B cell (primary cell): ENCODE measurements at regions of chr14 and their contacts with region 1.

Region 1: GRCh38 chr14:75293920-75294642 is 15.5 kb downstream of the FOS start:
- DNase-seq: peak; percentile 98
- ATAC-seq: peak; percentile 88
- H3K4me3 ChIP-seq: peak overlapping the region; percentile 71 to 88 (median 74)
- H3K4me3 Mint-ChIP-seq: peak overlapping the region; percentile 95
- H3K27ac ChIP-seq: peak overlapping the region; percentile 95 to 99
- H3K27ac Mint-ChIP-seq: peak overlapping the region; percentile 97
- H3K4me1 ChIP-seq: peaks cover 18 to 28% of the 10 kb centered on the region in 2 donors
- H3K4me1 Mint-ChIP-seq: peaks cover 22% of the 10 kb centered on the region
- H3K27me3 ChIP-seq: peaks cover 0 to 4% (median 0%) of the 10 kb centered on the region in 4 experiments
- H3K27me3 Mint-ChIP-seq: peaks cover 8% of the 10 kb centered on the region
- CTCF ChIP-seq: no peak

Region 2: GRCh38 chr14:75132382-75133086 is 161.5 kb before region 1 on chr14:
- CTCF ChIA-PET with region 1: interaction called, 321 read pairs
- POLR2A ChIA-PET with region 1: interaction called, 6 read pairs
- intact Hi-C with region 1: loop called (anchors 1 kb)
- DNase-seq: peak; percentile 85
- ATAC-seq: peak; percentile 95
- H3K4me3 ChIP-seq: no peak overlapping the region
- H3K4me3 Mint-ChIP-seq: no peak overlapping the region
- H3K27ac ChIP-seq: peak overlapping the region in 1 of 2 donors; percentile 49
- H3K27ac Mint-ChIP-seq: peak overlapping the region; percentile 3
- H3K4me1 ChIP-seq: peaks cover 4 to 5% of the 10 kb centered on the region in 2 donors
- H3K4me1 Mint-ChIP-seq: peaks cover 14% of the 10 kb centered on the region
- H3K27me3 ChIP-seq: no peaks in the 10 kb centered on the region
- H3K27me3 Mint-ChIP-seq: no peaks in the 10 kb centered on the region
- CTCF ChIP-seq: peak; percentile 78

Region 3: GRCh38 chr14:75176142-75176820 is 117.8 kb before region 1 on chr14 and contains the start of gene TMED10:
- CTCF ChIA-PET with region 1: interaction called, 20 read pairs
- POLR2A ChIA-PET with region 1: interaction called, 11 read pairs
- intact Hi-C with region 1: loop called (anchors 1 kb)
- DNase-seq: peak; percentile 97
- ATAC-seq: peak; percentile 74
- H3K4me3 ChIP-seq: peak within 1 kb of the TSS; percentile 82 to 99 (median 91)
- H3K4me3 Mint-ChIP-seq: peak within 1 kb of the TSS; percentile 92
- H3K27ac ChIP-seq: peak within 1 kb of the TSS; percentile 97 to 99
- H3K27ac Mint-ChIP-seq: peak within 1 kb of the TSS; percentile 97
- H3K4me1 ChIP-seq: peaks cover 17 to 22% of the 10 kb centered on the region in 2 donors
- H3K4me1 Mint-ChIP-seq: peaks cover 32% of the 10 kb centered on the region
- H3K27me3 ChIP-seq: no peaks in the 10 kb centered on the region
- H3K27me3 Mint-ChIP-seq: no peaks in the 10 kb centered on the region
- CTCF ChIP-seq: no peak
- total RNA-seq, gene TMED10: 111 and 119 TPM in 2 replicates

Region 4: GRCh38 chr14:75223664-75224154 is 70.4 kb before region 1 on chr14:
- CTCF ChIA-PET with region 1: interaction called, 5 read pairs
- POLR2A ChIA-PET with region 1: interaction called, 5 read pairs
- intact Hi-C with region 1: loop called (anchors 2 kb)
- DNase-seq: peak; percentile 64
- ATAC-seq: peak; percentile 54
- H3K4me3 ChIP-seq: no peak overlapping the region
- H3K4me3 Mint-ChIP-seq: peak overlapping the region; percentile 35
- H3K27ac ChIP-seq: no peak overlapping the region
- H3K27ac Mint-ChIP-seq: peak overlapping the region; percentile 12
- H3K4me1 ChIP-seq: peaks cover 34 to 45% of the 10 kb centered on the region in 2 donors
- H3K4me1 Mint-ChIP-seq: peaks cover 39% of the 10 kb centered on the region
- H3K27me3 ChIP-seq: no peaks in the 10 kb centered on the region
- H3K27me3 Mint-ChIP-seq: no peaks in the 10 kb centered on the region
- CTCF ChIP-seq: no peak

Region 5: GRCh38 chr14:75278422-75279161 is 15.5 kb before region 1 on chr14 and contains the start of gene FOS:
- CTCF ChIA-PET with region 1: interaction called, 11 read pairs
- POLR2A ChIA-PET with region 1: interaction called, 6 read pairs
- intact Hi-C with region 1: loop called (anchors 1 kb)
- DNase-seq: peak; percentile 99
- ATAC-seq: peak; percentile 63
- H3K4me3 ChIP-seq: peak within 1 kb of the TSS; percentile 61 to 100 (median 95)
- H3K4me3 Mint-ChIP-seq: peak within 1 kb of the TSS; percentile 99
- H3K27ac ChIP-seq: peak within 1 kb of the TSS; percentile 50 to 93
- H3K27ac Mint-ChIP-seq: peak within 1 kb of the TSS; percentile 96
- H3K4me1 ChIP-seq: peaks cover 56 to 58% of the 10 kb centered on the region in 2 donors
- H3K4me1 Mint-ChIP-seq: peaks cover 65% of the 10 kb centered on the region
- H3K27me3 ChIP-seq: peaks cover 0 to 52% (median 28%) of the 10 kb centered on the region in 4 experiments
- H3K27me3 Mint-ChIP-seq: peaks cover 38% of the 10 kb centered on the region
- CTCF ChIP-seq: no peak
- total RNA-seq, gene FOS: 103 and 104 TPM in 2 replicates

Region 6: DNA sequence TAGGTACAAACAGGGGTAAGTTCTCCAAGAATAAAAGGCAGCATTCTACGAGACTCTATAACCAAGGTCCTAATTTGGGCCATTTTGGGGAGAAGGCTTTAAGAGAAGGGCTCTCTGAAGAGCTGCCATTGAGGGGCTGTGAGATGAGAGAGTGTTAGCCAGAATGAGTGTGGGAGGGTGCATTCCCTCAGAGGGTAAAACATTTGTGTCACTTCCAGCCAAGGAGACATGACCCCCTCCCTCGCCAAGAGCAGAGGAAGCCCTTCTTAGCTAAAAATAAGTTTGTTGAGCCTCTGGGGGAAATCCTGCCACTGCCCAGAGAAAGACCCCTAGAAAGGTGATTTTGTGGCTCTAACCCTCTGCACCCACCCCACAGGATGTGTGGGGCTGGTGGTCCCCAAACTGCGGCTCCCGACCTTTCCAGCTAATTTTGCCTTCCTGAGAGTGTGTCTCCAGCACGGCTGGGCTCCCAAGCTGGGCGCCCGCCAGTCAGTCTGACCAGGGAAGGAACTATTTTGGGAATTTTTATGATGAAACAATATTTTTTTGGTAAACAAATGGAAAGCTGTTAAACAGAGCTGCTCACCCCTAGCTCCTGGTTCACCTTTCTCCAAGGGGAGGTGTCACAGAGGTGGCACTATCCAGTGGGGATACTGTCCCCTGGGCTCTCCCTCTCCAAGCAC is 67.8 kb after region 1 on chr14:
- CTCF ChIA-PET with region 1: no interaction called
- POLR2A ChIA-PET with region 1: no interaction called
- intact Hi-C with region 1: no loop called
- DNase-seq: no peak
- ATAC-seq: no peak
- H3K4me3 ChIP-seq: no peak overlapping the region
- H3K4me3 Mint-ChIP-seq: no peak overlapping the region
- H3K27ac ChIP-seq: no peak overlapping the region
- H3K27ac Mint-ChIP-seq: no peak overlapping the region
- H3K4me1 ChIP-seq: no peaks in the 10 kb centered on the region
- H3K4me1 Mint-ChIP-seq: no peaks in the 10 kb centered on the region
- H3K27me3 ChIP-seq: peaks cover 0 to 5% (median 0%) of the 10 kb centered on the region in 4 experiments
- H3K27me3 Mint-ChIP-seq: peaks cover 4% of the 10 kb centered on the region
- CTCF ChIP-seq: no peak

Region 7: DNA sequence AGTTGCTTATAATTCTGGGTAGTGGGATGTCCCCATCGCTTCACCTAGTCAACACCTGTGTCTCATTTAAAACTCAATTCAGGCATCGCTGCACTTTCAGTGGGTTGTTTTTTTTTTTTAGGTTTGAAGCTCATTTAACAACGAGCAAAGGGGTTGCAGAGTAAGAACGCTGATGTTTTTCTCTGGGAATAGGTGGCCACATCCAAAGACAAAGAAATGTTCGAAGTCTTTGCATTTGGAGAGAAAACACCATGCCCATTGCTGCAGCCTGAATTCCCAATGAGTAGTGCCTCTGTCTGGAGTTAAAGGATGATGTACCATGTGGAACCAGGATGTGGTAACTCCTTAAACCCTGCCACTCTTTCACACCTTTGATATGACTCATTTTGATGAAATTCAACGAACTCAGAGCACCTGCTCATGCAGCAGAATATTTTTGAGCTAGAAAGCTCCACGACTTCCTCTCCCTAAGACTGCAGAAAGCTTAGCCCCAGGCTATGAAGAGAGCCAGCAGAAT is 193.1 kb after region 1 on chr14:
- CTCF ChIA-PET with region 1: interaction called, 12 read pairs
- POLR2A ChIA-PET with region 1: interaction called, 5 read pairs
- intact Hi-C with region 1: no loop called
- DNase-seq: no peak
- ATAC-seq: no peak
- H3K4me3 ChIP-seq: no peak overlapping the region
- H3K4me3 Mint-ChIP-seq: no peak overlapping the region
- H3K27ac ChIP-seq: no peak overlapping the region
- H3K27ac Mint-ChIP-seq: peak overlapping the region; percentile 8
- H3K4me1 ChIP-seq: peaks cover 0 to 8% of the 10 kb centered on the region in 2 donors
- H3K4me1 Mint-ChIP-seq: peaks cover 12% of the 10 kb centered on the region
- H3K27me3 ChIP-seq: peaks cover 0 to 11% (median 0%) of the 10 kb centered on the region in 4 experiments
- H3K27me3 Mint-ChIP-seq: no peaks in the 10 kb centered on the region
- CTCF ChIP-seq: no peak